ENCODE measurements at regions of chr12 and their contacts with region 1.

Region 1: DNA sequence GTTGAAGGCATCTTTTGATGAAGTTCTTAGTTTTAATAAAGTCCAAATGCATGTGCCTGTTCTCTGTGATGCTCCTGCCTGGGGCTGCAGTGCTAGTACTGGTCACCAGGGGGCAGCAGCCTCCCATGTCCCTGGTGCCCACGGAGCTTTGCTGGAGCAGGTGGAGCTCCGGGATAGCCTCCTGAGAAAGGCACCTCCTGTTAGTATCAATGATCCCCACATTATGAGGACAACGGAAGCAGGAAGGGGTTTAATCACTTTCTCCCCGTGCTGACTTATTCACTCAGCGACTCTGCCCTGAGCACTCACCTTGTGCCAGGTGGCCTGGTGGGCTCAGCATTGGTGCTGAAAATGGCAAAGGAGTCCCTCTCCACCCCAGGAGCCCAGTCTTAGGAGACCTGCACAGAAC is 123.0 kb upstream of the PZP start:
- DNase-seq: peak; percentile 49
- H3K4me3 Mint-ChIP-seq: no peak overlapping the region
- H3K27ac Mint-ChIP-seq: no peak overlapping the region
- H3K4me1 Mint-ChIP-seq: peaks cover 17% of the 10 kb centered on the region
- H3K27me3 Mint-ChIP-seq: no peaks in the 10 kb centered on the region

Region 2: GRCh38 chr12:9372202-9372601 is 41.0 kb after region 1 on chr12:
- intact Hi-C with region 1: loop called (anchors 5 kb)
- DNase-seq: no peak
- H3K4me3 Mint-ChIP-seq: no peak overlapping the region
- H3K27ac Mint-ChIP-seq: no peak overlapping the region
- H3K4me1 Mint-ChIP-seq: peaks cover 10% of the 10 kb centered on the region
- H3K27me3 Mint-ChIP-seq: peaks cover 54% of the 10 kb centered on the region

Region 3: DNA sequence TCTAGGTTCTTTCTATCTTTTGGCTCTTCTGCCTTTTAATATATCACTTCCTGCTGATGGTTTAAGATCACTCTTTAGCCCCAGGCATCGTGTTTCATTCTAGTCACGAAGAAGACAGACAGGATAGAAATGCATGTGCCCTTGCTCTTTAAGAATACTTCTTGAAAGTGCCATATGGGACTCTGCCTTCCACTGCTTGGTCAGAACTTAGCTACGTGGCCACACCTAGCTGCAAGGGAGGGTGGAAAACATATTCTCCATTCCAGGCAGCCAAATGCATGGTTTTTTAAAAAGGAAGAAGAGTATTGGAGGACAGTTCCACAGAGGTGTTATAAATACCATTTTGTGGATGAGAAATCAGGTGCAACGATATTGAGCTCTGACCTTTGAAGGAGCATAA is 133.2 kb after region 1 on chr12:
- intact Hi-C with region 1: loop called (anchors 1 kb)
- DNase-seq: no peak
- H3K4me3 Mint-ChIP-seq: no peak overlapping the region
- H3K27ac Mint-ChIP-seq: no peak overlapping the region
- H3K4me1 Mint-ChIP-seq: peaks cover 1% of the 10 kb centered on the region
- H3K27me3 Mint-ChIP-seq: no peaks in the 10 kb centered on the region

Measured in activated T-helper 2 cell treated with anti-CD3 and anti-CD28 coated beads, Interferon-gamma antibody, Interleukin-2, Interleukin-4, amounts not matched to agents 10 μg/mL and 5 μg/mL and 100 μg/mL, durations not matched to agents 14 hours and 24 hours and 36 hours (primary cell).